GM12878 (cell line): ENCODE measurements at regions of chr5 and their contacts with region 1.

Region 1: GRCh38 chr5:169591636-169592035 is 8.1 kb downstream of the SPDL1 start:
- DNase-seq: no peak
- ATAC-seq: no peak
- H3K4me3 ChIP-seq: no peak overlapping the region
- H3K27ac ChIP-seq: no peak overlapping the region
- H3K4me1 ChIP-seq: no peaks in the 10 kb centered on the region
- H3K27me3 ChIP-seq: no peaks in the 10 kb centered on the region
- CTCF ChIP-seq: no peak
- EP300 ChIP-seq: no peak
- POLR2A ChIP-seq: no peak
- RAD21 ChIP-seq: no peak

Region 2: GRCh38 chr5:169609716-169610115 is 18.1 kb after region 1 on chr5:
- CTCF ChIA-PET with region 1: no interaction called
- POLR2A ChIA-PET with region 1: no interaction called
- RAD21 ChIA-PET with region 1: interaction called, 3 read pairs
- SMC1A ChIA-PET with region 1: interaction called, 16 read pairs
- in situ Hi-C with region 1: no loop called
- intact Hi-C with region 1: no loop called
- DNase-seq: no peak
- ATAC-seq: no peak
- H3K4me3 ChIP-seq: no peak overlapping the region
- H3K27ac ChIP-seq: no peak overlapping the region
- H3K4me1 ChIP-seq: peaks cover 6% of the 10 kb centered on the region
- H3K27me3 ChIP-seq: no peaks in the 10 kb centered on the region
- CTCF ChIP-seq: no peak
- EP300 ChIP-seq: no peak
- POLR2A ChIP-seq: no peak
- RAD21 ChIP-seq: no peak

Region 3: DNA sequence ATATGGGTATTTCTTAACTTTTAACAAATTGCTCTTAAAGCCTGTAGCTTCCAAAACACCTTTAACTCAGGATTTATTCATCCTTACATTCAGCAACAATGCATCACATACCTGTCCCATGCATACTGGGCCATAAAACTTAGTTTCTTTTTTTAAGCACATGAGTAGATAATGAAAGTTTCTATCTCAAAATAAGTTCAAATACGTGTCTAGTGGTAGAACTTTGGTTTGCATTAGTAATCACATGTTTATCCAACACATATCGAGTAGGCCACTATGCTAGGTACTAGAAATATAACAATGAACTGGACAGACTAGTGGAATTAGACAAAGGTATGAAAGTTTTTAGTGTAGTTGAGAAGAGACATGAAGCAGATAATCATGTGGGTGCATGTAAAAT is 145.0 kb after region 1 on chr5:
- CTCF ChIA-PET with region 1: no interaction called
- POLR2A ChIA-PET with region 1: no interaction called
- RAD21 ChIA-PET with region 1: no interaction called
- SMC1A ChIA-PET with region 1: no interaction called
- in situ Hi-C with region 1: no loop called
- intact Hi-C with region 1: no loop called
- DNase-seq: no peak
- ATAC-seq: no peak; the same call in 2 of the 3 replicates
- H3K4me3 ChIP-seq: no peak overlapping the region
- H3K27ac ChIP-seq: peak overlapping the region; percentile 7; the same call in 1 of the 2 replicates
- H3K4me1 ChIP-seq: peaks cover 6% of the 10 kb centered on the region; the same call in 1 of the 2 replicates
- H3K27me3 ChIP-seq: no peaks in the 10 kb centered on the region
- CTCF ChIP-seq: no peak
- EP300 ChIP-seq: no peak
- POLR2A ChIP-seq: no peak
- RAD21 ChIP-seq: 0 out of 2 replicates have a peak, but pooled peaks have one; percentile 2